ENCODE measurements at regions of chr3 and their contacts with region 1.

Region 1: GRCh38 chr3:184561061-184561912 is at the start of gene EPHB3:
- DNase-seq: peak; percentile 91
- H3K4me3 ChIP-seq: peak within 1 kb of the TSS; percentile 72
- CTCF ChIP-seq: peak; percentile 100

Region 2: GRCh38 chr3:184347321-184348056 is 213.8 kb before region 1 on chr3:
- CTCF ChIA-PET with region 1: no interaction called
- POLR2A ChIA-PET with region 1: no interaction called
- DNase-seq: no peak
- H3K4me3 ChIP-seq: no peak overlapping the region
- CTCF ChIP-seq: no peak

Region 3: GRCh38 chr3:184448311-184449160 is 112.8 kb before region 1 on chr3:
- CTCF ChIA-PET with region 1: no interaction called
- POLR2A ChIA-PET with region 1: no interaction called
- DNase-seq: peak; percentile 44
- H3K4me3 ChIP-seq: no peak overlapping the region
- CTCF ChIP-seq: no peak

Region 4: DNA sequence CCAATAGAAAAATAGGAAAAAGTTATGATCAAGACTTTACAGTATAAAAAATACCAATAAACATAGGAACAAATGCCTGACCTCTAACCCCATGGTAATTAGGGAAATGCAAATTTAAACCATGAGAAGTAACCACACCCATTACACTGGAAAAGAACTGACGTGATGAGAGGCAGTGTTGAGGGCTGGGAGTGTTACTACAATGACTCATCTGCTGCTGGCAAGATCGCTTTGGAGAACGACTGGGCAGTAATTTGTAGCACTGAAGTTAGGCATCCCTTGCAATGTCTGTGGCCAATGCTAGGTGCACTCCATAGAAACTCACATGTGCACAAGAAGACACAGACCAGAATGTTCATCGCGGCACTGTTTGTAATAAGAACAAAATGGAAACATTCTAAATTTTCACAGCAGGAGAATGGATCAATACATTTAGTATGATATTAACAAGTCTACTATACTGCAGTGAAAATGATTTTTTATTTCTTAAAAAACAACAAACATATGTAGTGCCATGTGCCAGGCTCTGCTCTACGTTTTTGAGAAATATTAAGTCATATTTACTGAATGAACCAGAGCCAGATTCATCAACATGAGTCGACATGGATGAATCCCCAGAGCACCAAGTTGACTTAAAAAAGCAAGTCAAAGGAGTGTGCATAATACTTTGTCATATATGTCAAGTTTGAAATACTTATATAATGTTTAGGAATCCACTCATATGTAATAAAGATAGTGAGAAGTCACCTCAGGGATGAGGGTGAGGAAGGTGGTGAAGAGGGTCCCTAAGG is 37.3 kb before region 1 on chr3:
- CTCF ChIA-PET with region 1: interaction called, 10 read pairs
- POLR2A ChIA-PET with region 1: no interaction called
- DNase-seq: no peak
- H3K4me3 ChIP-seq: no peak overlapping the region
- CTCF ChIP-seq: no peak

Region 5: GRCh38 chr3:184740524-184741484 is 179.5 kb after region 1 on chr3:
- CTCF ChIA-PET with region 1: interaction called, 19 read pairs
- POLR2A ChIA-PET with region 1: interaction called, 4 read pairs
- DNase-seq: no peak
- H3K4me3 ChIP-seq: no peak overlapping the region
- CTCF ChIP-seq: no peak

Region 6: DNA sequence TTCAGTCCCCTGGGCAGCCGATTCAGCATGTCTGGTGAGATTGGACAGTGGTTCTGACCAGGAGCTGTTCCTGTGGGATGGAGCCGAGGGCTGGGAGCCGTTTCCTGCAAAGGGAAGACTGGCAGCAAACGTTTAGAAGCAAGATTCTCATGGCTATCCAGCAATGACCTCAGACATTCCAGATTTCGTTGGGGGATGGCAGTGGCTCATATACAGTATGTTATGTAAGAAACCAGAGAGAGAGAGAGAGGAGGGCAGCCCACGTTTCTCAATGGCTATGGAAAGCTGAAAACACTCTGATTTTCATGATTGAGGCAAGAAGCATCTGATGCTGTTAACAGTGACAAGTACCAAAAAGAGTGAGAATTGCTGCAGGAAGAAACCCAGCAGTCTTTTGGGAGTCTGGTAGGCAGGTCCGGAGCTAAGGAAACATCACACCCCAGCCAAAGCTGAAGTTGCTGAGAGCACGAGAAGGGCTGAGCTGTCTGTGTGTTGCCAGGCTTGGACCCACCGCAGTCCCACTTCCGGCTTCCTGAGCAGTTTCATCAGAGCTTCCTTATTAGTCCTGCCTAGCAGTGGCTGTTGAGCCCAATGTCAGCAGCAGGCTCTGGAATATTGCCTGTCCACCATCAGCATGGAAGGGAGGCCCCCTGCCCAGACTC is 225.1 kb after region 1 on chr3:
- CTCF ChIA-PET with region 1: interaction called, 3 read pairs
- POLR2A ChIA-PET with region 1: interaction called, 14 read pairs
- DNase-seq: peak; percentile 77
- H3K4me3 ChIP-seq: peak overlapping the region; percentile 27
- CTCF ChIP-seq: no peak

Region 7: DNA sequence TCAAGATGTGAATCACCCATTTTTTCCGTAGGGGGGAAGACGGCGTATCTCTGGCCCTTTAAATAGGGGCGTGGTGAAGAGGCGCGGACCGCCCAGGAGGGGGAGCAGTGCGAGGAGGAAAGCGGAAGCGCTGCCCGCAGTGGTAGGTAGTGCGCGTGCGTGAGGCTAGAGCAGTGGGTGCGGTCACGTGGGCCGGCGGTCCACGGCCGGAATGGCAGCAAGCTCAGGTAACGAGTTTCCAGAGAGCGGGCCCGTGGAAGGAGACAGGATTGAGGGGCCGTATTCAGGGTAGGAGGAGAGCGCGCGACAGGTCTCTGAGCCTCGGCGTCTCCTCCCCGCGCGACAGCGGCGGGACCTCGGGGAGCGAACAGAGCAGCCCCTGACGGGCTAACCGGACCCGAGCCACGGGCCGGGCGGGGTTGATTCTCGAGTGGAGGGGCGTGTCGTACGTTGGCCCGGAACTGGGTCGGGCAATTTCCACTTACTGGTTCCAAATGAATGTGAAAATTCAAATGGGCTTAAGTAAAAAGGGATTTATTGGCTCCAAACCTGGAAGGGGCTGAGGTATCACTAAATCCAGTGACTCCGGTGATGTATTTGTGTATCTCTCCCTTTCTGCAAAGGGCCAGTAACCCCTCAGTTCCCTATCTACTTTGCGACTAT is 250.8 kb after region 1 on chr3 and contains the start of gene VPS8:
- CTCF ChIA-PET with region 1: interaction called, 23 read pairs
- POLR2A ChIA-PET with region 1: no interaction called
- DNase-seq: peak; percentile 45
- H3K4me3 ChIP-seq: peak within 1 kb of the TSS; percentile 91
- CTCF ChIP-seq: peak; percentile 80

Measured in AG04449 (cell line).